Dendritic cell treated with granulocyte-macrophage colony-stimulating factor and Interleukin-4, amounts not matched to agents 40 ng/mL and 50 ng/mL, for 4 days (primary cell): ENCODE measurements at regions of chr1 and their contacts with region 1.

Region 1: DNA sequence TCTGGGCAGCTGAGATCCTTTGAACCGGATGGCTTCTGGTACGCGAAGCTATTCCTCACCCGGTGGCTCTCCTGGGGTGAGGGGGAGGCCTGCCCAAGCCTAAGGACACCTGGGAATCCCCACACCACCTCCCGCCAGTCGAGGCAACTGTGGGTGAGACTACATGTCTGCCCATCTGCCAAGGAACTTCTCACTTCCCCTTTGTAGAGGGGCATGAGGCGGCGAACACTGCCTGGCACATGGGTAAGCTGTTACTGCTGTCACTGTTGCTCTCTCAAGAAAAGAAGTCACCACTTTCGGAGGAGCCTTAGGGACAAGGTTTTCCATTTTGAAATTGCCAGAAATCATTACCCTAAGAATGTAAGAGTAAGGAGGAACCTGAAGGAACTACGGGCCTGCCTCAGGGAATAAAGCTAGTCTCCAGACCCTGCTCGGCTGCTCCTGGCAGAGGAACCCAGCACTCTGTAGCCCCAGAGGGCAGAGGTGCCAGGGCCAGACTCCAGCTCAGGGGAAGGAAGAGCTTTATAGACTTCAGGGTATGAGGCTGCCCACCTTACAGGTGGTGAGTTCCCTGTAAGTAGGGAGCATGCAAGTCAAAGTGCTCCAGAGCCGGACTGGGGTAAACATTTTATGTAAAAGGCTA is 23.3 kb downstream of the SLC2A1 start:
- H3K4me3 Mint-ChIP-seq: no peak overlapping the region
- H3K27ac Mint-ChIP-seq: peak overlapping the region; percentile 75
- H3K4me1 Mint-ChIP-seq: peaks cover 94% of the 10 kb centered on the region
- H3K27me3 Mint-ChIP-seq: peaks cover 1% of the 10 kb centered on the region

Region 2: DNA sequence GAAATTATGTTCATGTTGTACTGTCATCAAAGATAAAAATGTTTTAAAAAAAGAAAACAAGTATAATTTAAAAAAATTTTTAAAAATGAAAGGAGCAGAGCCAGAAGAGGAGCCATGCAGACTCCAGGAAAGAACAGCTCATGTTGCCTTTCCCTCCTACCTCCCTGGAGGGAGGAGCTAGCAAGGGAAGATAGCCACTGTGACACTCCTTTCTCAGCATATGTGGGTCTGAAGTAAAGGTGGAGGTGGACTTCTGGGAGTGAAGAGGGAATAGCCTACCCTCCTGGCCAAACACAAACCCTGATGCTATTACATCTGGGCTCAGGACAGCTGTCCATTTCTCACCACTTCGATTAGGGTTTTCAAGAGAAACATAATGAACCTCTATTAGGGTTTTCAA is 30.9 kb before region 1 on chr1:
- intact Hi-C with region 1: no loop called
- H3K4me3 Mint-ChIP-seq: no peak overlapping the region
- H3K27ac Mint-ChIP-seq: no peak overlapping the region
- H3K4me1 Mint-ChIP-seq: no peaks in the 10 kb centered on the region
- H3K27me3 Mint-ChIP-seq: peaks cover 3% of the 10 kb centered on the region

Region 3: DNA sequence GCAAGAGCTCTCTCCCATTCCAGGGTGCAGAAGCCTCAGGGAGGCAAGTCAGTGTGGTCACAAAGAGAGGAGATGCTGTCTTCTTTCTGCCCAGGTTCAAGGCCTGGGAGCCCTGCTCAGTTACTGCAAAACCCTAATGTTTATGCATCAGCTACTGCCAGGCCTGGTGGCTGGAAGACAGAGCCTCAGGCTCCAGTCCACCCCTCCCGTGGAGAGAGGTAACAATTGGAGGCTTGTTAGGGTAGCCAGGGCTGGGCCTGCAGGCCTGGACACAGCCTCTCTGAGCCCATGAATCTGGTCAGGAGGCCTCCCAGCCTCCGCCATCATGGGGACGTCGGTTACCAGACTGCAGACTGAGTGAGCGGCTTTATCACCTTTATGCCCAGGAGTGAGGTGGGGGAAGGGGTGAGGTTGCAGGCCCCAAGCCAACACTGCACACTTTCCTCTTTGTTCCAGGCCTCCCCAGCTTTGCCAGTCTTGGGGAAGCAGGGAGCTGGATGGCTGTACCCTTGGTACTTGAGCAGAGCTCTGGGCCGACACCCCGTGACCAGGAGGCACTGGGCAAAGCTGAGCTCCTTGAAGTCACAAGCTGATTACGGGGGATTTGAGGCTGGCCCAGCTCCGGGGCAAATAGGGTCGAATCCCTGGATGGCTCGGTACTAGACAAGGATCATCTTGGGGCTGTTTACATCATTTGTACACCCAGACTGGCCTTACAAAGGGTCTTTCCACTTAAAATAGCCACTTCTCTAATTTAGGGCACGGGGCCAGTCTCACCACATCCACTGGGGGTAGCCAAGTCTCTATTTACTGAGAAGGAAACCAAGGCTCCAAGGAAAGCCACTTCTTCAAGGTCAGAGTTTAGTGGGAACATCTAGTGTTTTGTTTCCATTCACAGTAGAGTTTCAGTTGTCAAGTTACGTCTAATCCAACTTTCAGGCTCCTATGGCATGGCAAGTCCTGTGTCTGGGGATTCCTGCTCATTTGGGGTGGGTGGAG is 18.1 kb after region 1 on chr1:
- intact Hi-C with region 1: loop called (anchors 2 kb)
- H3K4me3 Mint-ChIP-seq: no peak overlapping the region
- H3K27ac Mint-ChIP-seq: no peak overlapping the region
- H3K4me1 Mint-ChIP-seq: peaks cover 43% of the 10 kb centered on the region
- H3K27me3 Mint-ChIP-seq: peaks cover 10% of the 10 kb centered on the region